CD8-positive, alpha-beta memory T cell (primary cell): ENCODE measurements at regions of chr19 and their contacts with region 1.

Region 1: DNA sequence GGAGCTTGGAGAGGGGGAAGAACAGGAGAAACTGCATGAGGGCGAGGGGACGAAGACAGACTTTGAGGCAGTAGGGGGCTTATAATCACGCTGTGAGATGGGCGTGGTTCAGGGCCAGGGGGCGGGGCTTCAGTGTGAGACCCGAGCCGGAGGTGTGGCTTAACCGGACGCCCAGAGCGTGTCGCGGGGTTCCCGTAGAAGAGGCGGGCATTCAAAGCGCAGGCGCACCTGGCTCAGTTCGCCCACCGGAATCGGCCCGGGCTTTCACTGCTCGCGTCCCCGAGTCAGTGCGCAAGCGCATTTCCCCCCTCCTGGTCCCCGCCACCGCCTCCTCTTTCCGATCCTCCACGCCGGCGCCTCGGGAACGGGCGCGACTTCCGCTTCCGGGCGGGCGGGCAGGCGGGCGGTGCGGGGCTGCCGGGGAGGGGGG is 225 bp upstream of the ZNF865 start:
- DNase-seq: peak; percentile 97 to 98 (median 98)
- H3K4me3 ChIP-seq: peak overlapping the region; percentile 71
- H3K4me3 Mint-ChIP-seq: peak overlapping the region; percentile 85 to 93 (median 88)
- H3K27ac ChIP-seq: peak overlapping the region; percentile 80
- H3K27ac Mint-ChIP-seq: peak overlapping the region; percentile 85 to 97 (median 91)
- H3K4me1 ChIP-seq: peaks cover 35% of the 10 kb centered on the region
- H3K4me1 Mint-ChIP-seq: peaks cover 43 to 70% (median 65%) of the 10 kb centered on the region in 3 donors
- H3K27me3 ChIP-seq: no peaks in the 10 kb centered on the region
- H3K27me3 Mint-ChIP-seq: no peaks in the 10 kb centered on the region

Region 2: GRCh38 chr19:55467236-55468053 is 137.8 kb before region 1 on chr19:
- CTCF ChIA-PET with region 1: interaction called, 16 read pairs
- POLR2A ChIA-PET with region 1: no interaction called
- DNase-seq: peak; percentile 53 to 73 (median 69)
- H3K4me3 ChIP-seq: no peak overlapping the region
- H3K4me3 Mint-ChIP-seq: peak overlapping the region in 1 of 7 donors; percentile 54
- H3K27ac ChIP-seq: peak overlapping the region; percentile 81
- H3K27ac Mint-ChIP-seq: peak overlapping the region in 2 of 8 donors; percentile 22 to 47
- H3K4me1 ChIP-seq: peaks cover 8% of the 10 kb centered on the region
- H3K4me1 Mint-ChIP-seq: peaks cover 6 to 7% (median 6%) of the 10 kb centered on the region in 3 donors
- H3K27me3 ChIP-seq: no peaks in the 10 kb centered on the region
- H3K27me3 Mint-ChIP-seq: peaks cover 0 to 3% of the 10 kb centered on the region in 2 donors

Region 3: GRCh38 chr19:55516878-55517620 is 88.2 kb before region 1 on chr19:
- CTCF ChIA-PET with region 1: interaction called, 33 read pairs
- POLR2A ChIA-PET with region 1: no interaction called
- DNase-seq: peak; percentile 85 to 93 (median 86)
- H3K4me3 ChIP-seq: peak overlapping the region; percentile 38
- H3K4me3 Mint-ChIP-seq: peak overlapping the region; percentile 51 to 84 (median 81)
- H3K27ac ChIP-seq: no peak overlapping the region
- H3K27ac Mint-ChIP-seq: peak overlapping the region; percentile 27 to 94 (median 86)
- H3K4me1 ChIP-seq: peaks cover 5% of the 10 kb centered on the region
- H3K4me1 Mint-ChIP-seq: peaks cover 3 to 4% (median 4%) of the 10 kb centered on the region in 3 donors
- H3K27me3 ChIP-seq: no peaks in the 10 kb centered on the region
- H3K27me3 Mint-ChIP-seq: peaks cover 3 to 15% of the 10 kb centered on the region in 2 donors

Region 4: GRCh38 chr19:55617426-55617825 is 12.2 kb after region 1 on chr19:
- CTCF ChIA-PET with region 1: interaction called, 67 read pairs
- POLR2A ChIA-PET with region 1: no interaction called
- DNase-seq: no peak
- H3K4me3 ChIP-seq: no peak overlapping the region
- H3K4me3 Mint-ChIP-seq: no peak overlapping the region
- H3K27ac ChIP-seq: no peak overlapping the region
- H3K27ac Mint-ChIP-seq: peak overlapping the region in 2 of 8 donors; percentile 26 to 80
- H3K4me1 ChIP-seq: peaks cover 11% of the 10 kb centered on the region
- H3K4me1 Mint-ChIP-seq: peaks cover 18 to 30% (median 23%) of the 10 kb centered on the region in 3 donors
- H3K27me3 ChIP-seq: no peaks in the 10 kb centered on the region
- H3K27me3 Mint-ChIP-seq: no peaks in the 10 kb centered on the region

Region 5: DNA sequence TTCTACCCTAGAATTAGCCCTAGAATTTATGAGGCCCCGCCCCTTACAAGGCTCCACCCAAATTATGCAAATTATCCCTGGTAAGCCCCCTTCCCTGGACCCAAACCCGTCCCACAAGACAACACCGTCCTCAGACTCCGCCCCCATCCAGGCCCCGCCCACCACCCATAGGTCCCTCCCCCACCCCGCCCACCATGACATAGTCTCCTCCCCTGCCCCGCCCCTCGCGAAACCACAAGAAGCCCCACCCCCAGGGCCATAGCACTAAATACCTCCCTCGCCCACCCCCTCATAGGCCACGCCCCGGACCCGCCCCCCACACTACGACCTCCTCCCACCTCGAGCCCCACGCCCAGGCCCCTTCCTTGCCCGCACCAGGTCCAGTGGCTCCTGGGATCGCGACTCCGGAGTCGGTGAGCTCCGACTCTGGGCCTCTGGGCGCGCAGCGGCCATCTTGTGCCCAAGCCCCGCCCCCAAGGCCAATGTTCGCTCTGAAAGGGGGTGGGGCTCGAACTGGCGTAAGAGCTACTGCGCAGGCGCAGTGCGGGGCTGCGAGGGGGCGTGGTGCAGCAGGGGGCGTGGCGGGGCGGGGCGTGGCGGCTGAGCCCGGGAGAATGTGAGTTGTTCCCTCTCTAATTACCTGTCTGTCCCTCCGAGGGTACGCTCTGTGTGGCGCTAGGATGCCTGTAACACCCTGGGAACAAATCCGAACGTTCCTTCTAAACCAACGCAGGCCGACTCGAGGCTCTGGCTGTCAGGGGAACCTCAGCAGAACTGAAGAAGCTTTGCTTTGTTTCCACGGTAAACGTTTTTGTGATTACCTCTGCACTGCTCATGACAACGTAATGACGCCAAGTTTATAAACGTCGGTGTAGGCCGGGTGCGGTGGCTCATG is 19.1 kb after region 1 on chr19 and contains the start of gene ZNF784:
- CTCF ChIA-PET with region 1: interaction called, 67 read pairs
- POLR2A ChIA-PET with region 1: interaction called, 9 read pairs
- DNase-seq: peak; percentile 90 to 96 (median 91)
- H3K4me3 ChIP-seq: peak within 1 kb of the TSS; percentile 63
- H3K4me3 Mint-ChIP-seq: peak within 1 kb of the TSS; percentile 86 to 96 (median 90)
- H3K27ac ChIP-seq: peak within 1 kb of the TSS; percentile 65
- H3K27ac Mint-ChIP-seq: peak within 1 kb of the TSS; percentile 91 to 99 (median 94)
- H3K4me1 ChIP-seq: peaks cover 47% of the 10 kb centered on the region
- H3K4me1 Mint-ChIP-seq: peaks cover 45 to 63% (median 60%) of the 10 kb centered on the region in 3 donors
- H3K27me3 ChIP-seq: no peaks in the 10 kb centered on the region
- H3K27me3 Mint-ChIP-seq: no peaks in the 10 kb centered on the region
- total RNA-seq, gene ZNF784: 2.6 to 2.9 TPM

Region 6: DNA sequence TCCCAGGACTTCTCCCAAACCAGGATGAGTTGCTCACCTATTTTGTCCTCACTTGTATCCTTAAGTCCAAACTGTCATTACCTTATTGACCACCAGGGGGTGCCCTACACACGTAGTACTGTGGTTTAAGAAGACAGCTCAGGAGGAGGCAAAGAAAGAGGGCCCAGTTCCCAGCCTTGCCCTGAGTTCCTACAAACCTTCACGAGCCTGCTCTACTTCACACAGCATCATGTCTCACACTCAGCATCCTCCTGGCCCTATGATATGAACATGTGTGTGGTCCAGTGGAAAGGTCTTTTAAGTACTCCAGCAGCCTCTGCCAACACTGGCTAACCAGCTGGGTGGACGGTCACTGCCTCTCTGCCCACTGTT is 27.2 kb after region 1 on chr19:
- CTCF ChIA-PET with region 1: interaction called, 67 read pairs
- POLR2A ChIA-PET with region 1: interaction called, 3 read pairs
- DNase-seq: peak; percentile 81 to 92 (median 87)
- H3K4me3 ChIP-seq: no peak overlapping the region
- H3K4me3 Mint-ChIP-seq: peak overlapping the region in 4 of 7 donors; percentile 2 to 69 (median 36)
- H3K27ac ChIP-seq: no peak overlapping the region
- H3K27ac Mint-ChIP-seq: peak overlapping the region in 7 of 8 donors; percentile 6 to 83 (median 57)
- H3K4me1 ChIP-seq: peaks cover 43% of the 10 kb centered on the region
- H3K4me1 Mint-ChIP-seq: peaks cover 38 to 49% (median 47%) of the 10 kb centered on the region in 3 donors
- H3K27me3 ChIP-seq: no peaks in the 10 kb centered on the region
- H3K27me3 Mint-ChIP-seq: peaks cover 0 to 7% of the 10 kb centered on the region in 2 donors

Region 7: GRCh38 chr19:55643348-55644176 is 38.3 kb after region 1 on chr19 and contains the start of gene ZNF581:
- CTCF ChIA-PET with region 1: interaction called, 11 read pairs
- POLR2A ChIA-PET with region 1: interaction called, 4 read pairs
- DNase-seq: peak; percentile 65 to 84 (median 72)
- H3K4me3 ChIP-seq: peak within 1 kb of the TSS; percentile 95
- H3K4me3 Mint-ChIP-seq: peak within 1 kb of the TSS; percentile 84 to 98 (median 94)
- H3K27ac ChIP-seq: peak within 1 kb of the TSS; percentile 72
- H3K27ac Mint-ChIP-seq: peak within 1 kb of the TSS; percentile 85 to 98 (median 96)
- H3K4me1 ChIP-seq: peaks cover 34% of the 10 kb centered on the region
- H3K4me1 Mint-ChIP-seq: peaks cover 44 to 63% (median 58%) of the 10 kb centered on the region in 3 donors
- H3K27me3 ChIP-seq: no peaks in the 10 kb centered on the region
- H3K27me3 Mint-ChIP-seq: no peaks in the 10 kb centered on the region
- total RNA-seq, gene ZNF581: 32.8 to 34.4 TPM